ENCODE measurements at regions of chr9 and their contacts with region 1.

Region 1: GRCh38 chr9:128771745-128772519 is at the start of gene ZER1:
- DNase-seq: peak; percentile 91 to 94
- ATAC-seq: peak; percentile 97 to 99 (median 98)
- H3K4me3 ChIP-seq: peak within 1 kb of the TSS; percentile 64 to 97 (median 82)
- H3K27ac ChIP-seq: peak within 1 kb of the TSS; percentile 55 to 98 (median 96)
- H3K4me1 ChIP-seq: peaks cover 2 to 28% (median 23%) of the 10 kb centered on the region in 9 donors
- H3K27me3 ChIP-seq: no peaks in the 10 kb centered on the region
- CTCF ChIP-seq: no peak
- total RNA-seq, gene ZER1: 51.8 to 71.1 (median 60.9) TPM

Region 2: DNA sequence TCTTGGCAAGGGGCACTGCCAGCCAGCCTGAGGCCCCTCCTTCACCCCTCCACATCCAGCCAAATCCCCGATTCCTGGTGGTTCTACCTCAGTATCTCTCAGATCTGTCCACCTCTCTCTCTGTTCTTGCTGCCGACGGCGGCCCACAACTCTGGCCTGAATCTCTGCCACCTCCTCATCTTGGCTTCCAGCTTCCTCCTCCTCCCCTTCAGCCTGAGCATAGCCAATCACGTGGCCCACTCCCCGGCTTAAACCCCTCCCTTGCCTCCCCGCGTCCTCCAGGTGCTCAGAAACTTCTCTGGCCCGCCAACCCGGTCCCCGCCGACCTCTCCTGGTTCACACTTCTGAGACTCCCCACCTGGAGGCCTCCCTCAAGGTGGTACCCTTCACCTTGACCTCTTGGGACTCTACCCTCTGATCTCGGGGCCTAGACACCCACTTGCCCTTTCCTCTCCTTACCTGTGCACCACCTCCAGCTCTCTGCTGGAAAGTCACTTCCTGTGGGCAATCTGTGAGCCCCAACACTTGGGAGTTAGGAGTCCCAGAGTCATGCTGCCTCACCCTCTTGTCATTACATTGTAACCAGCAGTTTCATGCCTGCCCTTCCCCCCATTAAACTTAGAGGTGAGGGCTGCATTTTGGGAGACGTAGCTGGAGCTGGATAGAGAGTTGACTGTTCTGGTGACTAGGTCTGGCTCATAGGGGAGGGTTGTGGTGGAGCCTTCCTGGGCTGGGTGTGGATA is 87.5 kb before region 1 on chr9:
- intact Hi-C with region 1: no loop called
- DNase-seq: peak; percentile 71 to 72
- ATAC-seq: peak; percentile 30 to 76 (median 57)
- H3K4me3 ChIP-seq: peak overlapping the region; percentile 47 to 75 (median 58)
- H3K27ac ChIP-seq: peak overlapping the region; percentile 5 to 96 (median 72)
- H3K4me1 ChIP-seq: peaks cover 5 to 53% (median 26%) of the 10 kb centered on the region in 9 donors
- H3K27me3 ChIP-seq: no peaks in the 10 kb centered on the region
- CTCF ChIP-seq: no peak

Region 3: GRCh38 chr9:128702445-128702948 is 69.4 kb before region 1 on chr9 and contains the start of gene PKN3:
- intact Hi-C with region 1: loop called in 1 of 10 experiments (anchors 5 kb)
- DNase-seq: peak; percentile 90 to 92
- ATAC-seq: peak; percentile 76 to 87 (median 82)
- H3K4me3 ChIP-seq: peak within 1 kb of the TSS; percentile 56 to 93 (median 78)
- H3K27ac ChIP-seq: peak within 1 kb of the TSS; percentile 70 to 96 (median 93)
- H3K4me1 ChIP-seq: peaks cover 0 to 24% (median 15%) of the 10 kb centered on the region in 9 donors
- H3K27me3 ChIP-seq: no peaks in the 10 kb centered on the region
- CTCF ChIP-seq: peak; percentile 87 to 96 (median 94)
- total RNA-seq, gene PKN3: 3.7 to 8.9 (median 4.7) TPM

Region 4: GRCh38 chr9:128723866-128724743 is 47.8 kb before region 1 on chr9 and contains the start of gene ZDHHC12:
- intact Hi-C with region 1: loop called in 1 of 10 experiments (anchors 5 kb)
- DNase-seq: peak; percentile 94 to 95
- ATAC-seq: peak; percentile 92 to 95 (median 93)
- H3K4me3 ChIP-seq: peak within 1 kb of the TSS; percentile 27 to 81 (median 69)
- H3K27ac ChIP-seq: peak within 1 kb of the TSS in 9 of 10 donors; percentile 49 to 86 (median 71)
- H3K4me1 ChIP-seq: peaks cover 0 to 25% (median 9%) of the 10 kb centered on the region in 9 donors
- H3K27me3 ChIP-seq: no peaks in the 10 kb centered on the region
- CTCF ChIP-seq: no peak
- total RNA-seq, gene ZDHHC12: 4.1 to 22.5 (median 6.0) TPM

Region 5: GRCh38 chr9:128786681-128787601 is 15.0 kb after region 1 on chr9 and contains the start of gene TBC1D13:
- intact Hi-C with region 1: loop called in 3 of 10 experiments (anchors 1 to 2 kb)
- DNase-seq: peak; percentile 90 to 91
- ATAC-seq: peak; percentile 96 to 98 (median 97)
- H3K4me3 ChIP-seq: peak within 1 kb of the TSS; percentile 85 to 100 (median 96)
- H3K27ac ChIP-seq: peak within 1 kb of the TSS; percentile 71 to 95 (median 89)
- H3K4me1 ChIP-seq: peaks cover 8 to 30% (median 19%) of the 10 kb centered on the region in 9 donors
- H3K27me3 ChIP-seq: no peaks in the 10 kb centered on the region
- CTCF ChIP-seq: no peak
- total RNA-seq, gene TBC1D13: 15.0 to 21.3 (median 17.8) TPM

Region 6: GRCh38 chr9:129910628-129911567 is 1139.0 kb after region 1 on chr9:
- intact Hi-C with region 1: no loop called
- DNase-seq: no peak
- ATAC-seq: peak in 1 of 8 donors; percentile 68
- H3K4me3 ChIP-seq: no peak overlapping the region
- H3K27ac ChIP-seq: peak overlapping the region in 1 of 10 donors; percentile 4
- H3K4me1 ChIP-seq: peaks cover 0 to 13% (median 0%) of the 10 kb centered on the region in 9 donors
- H3K27me3 ChIP-seq: no peaks in the 10 kb centered on the region
- CTCF ChIP-seq: no peak